ENCODE measurements at regions of chr2 and their contacts with region 1.

Region 1: GRCh38 chr2:159168707-159169106 is 117.8 kb downstream of the WDSUB1 start:
- DNase-seq: no peak
- ATAC-seq: no peak
- H3K4me3 Mint-ChIP-seq: no peak overlapping the region
- H3K27ac Mint-ChIP-seq: no peak overlapping the region
- H3K4me1 Mint-ChIP-seq: no peaks in the 10 kb centered on the region
- H3K27me3 Mint-ChIP-seq: no peaks in the 10 kb centered on the region
- CTCF ChIP-seq: no peak

Region 2: GRCh38 chr2:159140070-159140769 is 28.5 kb before region 1 on chr2:
- CTCF ChIA-PET with region 1: interaction called, 11 read pairs
- POLR2A ChIA-PET with region 1: no interaction called
- DNase-seq: no peak
- ATAC-seq: no peak
- H3K4me3 Mint-ChIP-seq: no peak overlapping the region
- H3K27ac Mint-ChIP-seq: no peak overlapping the region
- H3K4me1 Mint-ChIP-seq: peaks cover 12% of the 10 kb centered on the region
- H3K27me3 Mint-ChIP-seq: no peaks in the 10 kb centered on the region
- CTCF ChIP-seq: no peak

Region 3: DNA sequence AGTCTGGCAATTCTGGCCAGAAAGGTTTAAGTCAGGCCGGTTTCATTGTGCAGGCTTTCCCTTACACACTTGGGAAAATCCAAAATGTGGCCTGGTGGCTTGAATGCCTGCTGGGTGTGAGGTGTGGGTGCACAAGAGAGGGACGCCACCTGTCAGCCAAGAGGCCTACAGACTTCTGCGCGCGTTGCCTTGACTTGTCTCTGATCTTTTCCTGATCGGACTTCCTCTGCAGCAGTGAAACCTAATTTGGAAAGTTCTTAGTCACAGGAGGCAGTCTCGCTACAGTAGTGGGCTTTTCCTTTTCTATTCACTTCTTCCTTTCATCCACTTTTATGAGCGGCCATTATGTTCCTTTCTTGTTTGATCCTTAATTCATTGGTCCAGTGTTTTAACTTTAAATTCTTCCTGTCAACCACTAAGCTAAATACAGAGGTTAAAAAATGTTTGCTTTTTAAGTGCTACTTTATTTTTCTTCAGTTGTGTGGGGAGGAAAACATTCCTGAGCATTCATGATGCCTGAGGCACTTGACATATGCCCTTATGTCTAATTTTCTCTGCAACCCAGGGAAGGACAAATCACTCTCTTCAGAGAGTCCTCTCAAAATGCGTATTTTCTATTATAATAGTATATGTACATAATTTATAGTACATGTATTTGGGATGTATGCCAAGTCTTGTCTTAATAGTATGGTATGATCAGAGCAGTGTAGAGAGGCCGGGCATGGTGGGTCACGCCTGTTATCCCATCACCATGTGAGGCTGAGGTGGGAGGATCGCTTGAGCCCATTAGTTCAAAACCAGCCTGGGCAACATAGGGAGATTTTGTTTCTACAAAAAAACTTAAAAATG is 11.1 kb before region 1 on chr2:
- CTCF ChIA-PET with region 1: no interaction called
- POLR2A ChIA-PET with region 1: no interaction called
- DNase-seq: no peak
- ATAC-seq: no peak
- H3K4me3 Mint-ChIP-seq: no peak overlapping the region
- H3K27ac Mint-ChIP-seq: no peak overlapping the region
- H3K4me1 Mint-ChIP-seq: peaks cover 12% of the 10 kb centered on the region
- H3K27me3 Mint-ChIP-seq: no peaks in the 10 kb centered on the region
- CTCF ChIP-seq: no peak

Region 4: DNA sequence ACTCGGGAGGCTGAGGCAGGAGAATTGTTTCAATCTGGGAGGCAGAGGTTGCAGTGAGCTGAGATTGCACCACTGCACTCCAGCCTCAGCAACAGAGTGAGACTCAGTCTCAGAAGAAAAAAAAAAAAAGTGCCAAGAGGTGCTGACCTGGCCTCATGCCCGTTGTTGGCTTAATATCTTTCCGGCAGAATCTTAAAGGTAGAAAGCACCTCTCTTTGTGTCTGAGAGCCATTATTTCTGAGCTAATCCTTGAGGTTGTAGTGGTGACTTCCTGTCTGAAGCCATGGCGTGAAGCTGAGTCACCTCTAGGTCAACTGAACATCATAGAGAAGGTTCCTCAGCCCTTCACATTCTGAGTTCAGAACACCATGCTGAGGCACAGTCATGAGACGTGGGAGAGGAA is 57.4 kb after region 1 on chr2:
- CTCF ChIA-PET with region 1: no interaction called
- POLR2A ChIA-PET with region 1: no interaction called
- DNase-seq: no peak
- ATAC-seq: no peak
- H3K4me3 Mint-ChIP-seq: no peak overlapping the region
- H3K27ac Mint-ChIP-seq: peak overlapping the region; percentile 63; the same call in 1 of the 2 replicates
- H3K4me1 Mint-ChIP-seq: peaks cover 5% of the 10 kb centered on the region; the same call in 1 of the 2 replicates
- H3K27me3 Mint-ChIP-seq: no peaks in the 10 kb centered on the region
- CTCF ChIP-seq: no peak